ENCODE measurements at regions of chr15 and their contacts with region 1.

Region 1: DNA sequence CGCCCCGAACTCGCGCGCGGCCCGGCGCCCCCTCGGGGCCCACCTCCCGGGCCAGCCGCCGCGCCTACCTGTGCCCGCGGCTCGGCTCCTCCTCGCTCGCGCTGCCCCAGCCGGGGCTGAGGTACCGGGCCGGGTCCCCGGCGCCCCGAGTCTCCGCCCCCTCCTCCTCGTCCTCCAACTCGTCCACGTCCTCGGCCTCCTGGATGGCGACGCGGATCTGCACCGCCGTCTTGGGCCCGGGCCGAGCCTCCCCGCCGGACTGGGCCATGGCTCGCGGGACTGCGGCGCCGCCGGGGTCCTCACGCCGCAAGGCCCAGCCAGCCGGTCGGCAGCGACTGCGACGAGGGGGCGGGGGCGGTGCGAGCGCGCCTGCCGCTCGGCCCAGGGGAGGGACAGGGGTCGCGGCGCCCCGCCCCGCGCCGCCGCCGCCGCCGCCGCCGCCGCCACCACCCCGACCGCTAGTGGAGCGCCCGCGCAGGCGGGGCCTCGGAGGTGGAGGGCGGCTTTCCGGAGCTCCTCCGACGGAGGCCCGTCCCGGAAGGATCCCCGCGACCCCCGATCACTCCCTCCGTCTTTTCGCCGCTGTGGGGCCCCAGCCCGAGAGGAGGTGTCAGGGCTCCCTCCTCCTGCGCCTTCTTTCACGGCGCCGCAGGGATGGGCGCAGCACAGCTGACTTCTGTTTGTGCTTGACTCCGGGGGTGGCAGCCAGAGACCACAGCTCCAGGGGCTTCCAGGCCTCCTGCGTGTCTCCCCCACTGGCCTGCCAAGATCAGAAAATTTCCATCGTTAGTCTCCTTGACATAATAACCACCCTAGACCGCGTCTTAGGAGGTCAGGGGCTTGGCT is at the start of gene LARP6:
- DNase-seq: no peak
- H3K4me3 ChIP-seq: peak within 1 kb of the TSS; percentile 89
- CTCF ChIP-seq: no peak

Region 2: GRCh38 chr15:70870051-70870450 is 16.0 kb after region 1 on chr15:
- CTCF ChIA-PET with region 1: interaction called, 25 read pairs
- POLR2A ChIA-PET with region 1: interaction called, 7 read pairs
- DNase-seq: no peak
- H3K4me3 ChIP-seq: no peak overlapping the region
- CTCF ChIP-seq: no peak

Measured in AG04449 (cell line).